HAP-1 (cell line): ENCODE measurements at regions of chr19 and their contacts with region 1.

Region 1: DNA sequence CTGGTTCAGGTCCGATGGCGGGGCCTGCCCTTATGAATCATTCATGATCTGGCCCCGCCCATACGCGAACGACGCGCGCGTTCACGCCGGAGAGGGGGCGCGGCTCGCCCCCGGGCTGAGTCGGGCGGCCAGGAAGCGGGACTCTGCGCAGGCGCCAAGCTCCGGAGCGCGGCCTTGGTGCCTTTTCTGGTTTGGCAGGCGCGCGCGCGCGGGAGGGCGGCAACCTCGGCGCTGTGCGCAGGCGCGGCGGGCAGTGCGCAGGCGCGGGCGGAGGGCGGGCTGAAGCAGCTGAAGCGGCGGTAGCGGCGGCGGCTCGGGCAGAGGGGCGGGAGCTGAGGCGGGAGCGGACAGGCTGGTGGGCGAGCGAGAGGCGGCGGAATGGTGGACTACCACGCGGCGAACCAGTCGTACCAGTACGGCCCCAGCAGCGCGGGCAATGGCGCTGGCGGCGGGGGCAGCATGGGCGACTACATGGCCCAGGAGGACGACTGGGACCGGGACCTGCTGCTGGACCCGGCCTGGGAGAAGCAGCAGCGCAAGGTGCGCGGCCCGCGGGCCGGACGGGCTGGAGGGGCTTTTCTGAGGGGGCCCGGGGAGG is at the start of gene ACTN4:
- DNase-seq: peak; percentile 87 to 99
- H3K4me3 ChIP-seq: peak within 1 kb of the TSS; percentile 95
- H3K4me1 ChIP-seq: peaks cover 28% of the 10 kb centered on the region
- H3K27me3 ChIP-seq: no peaks in the 10 kb centered on the region

Region 2: DNA sequence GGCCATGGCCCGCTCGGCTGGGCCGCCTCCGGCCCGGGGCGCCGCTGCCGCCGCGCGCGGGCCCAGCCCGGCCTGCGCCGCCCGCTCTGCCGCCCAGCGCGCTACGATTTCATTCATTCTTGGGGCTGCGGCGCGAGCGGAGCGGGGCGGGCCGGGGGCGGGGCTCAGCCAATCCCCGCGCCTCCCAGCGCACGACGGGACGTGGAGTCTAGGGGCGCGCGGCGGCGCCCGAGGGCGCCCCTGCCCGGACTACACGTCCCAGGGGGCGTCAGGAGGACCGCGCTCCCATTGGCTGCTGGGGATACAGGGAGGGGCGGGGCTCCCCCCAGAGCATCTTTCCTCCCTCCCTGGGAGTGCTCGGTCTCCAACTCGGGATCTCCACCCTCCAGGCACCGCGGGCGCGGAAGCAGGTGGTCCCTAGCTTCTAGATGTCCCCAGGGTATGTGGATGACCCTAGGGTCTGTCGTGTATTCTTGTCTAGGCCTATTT is 417.8 kb before region 1 on chr19:
- in situ Hi-C with region 1: loop called (anchors 25 kb)
- DNase-seq: peak; percentile 92 to 94
- H3K4me3 ChIP-seq: peak overlapping the region; percentile 70
- H3K4me1 ChIP-seq: peaks cover 16% of the 10 kb centered on the region
- H3K27me3 ChIP-seq: peaks cover 8% of the 10 kb centered on the region

Region 3: GRCh38 chr19:38571682-38572081 is 75.8 kb before region 1 on chr19:
- in situ Hi-C with region 1: no loop called
- DNase-seq: no peak
- H3K4me3 ChIP-seq: no peak overlapping the region
- H3K4me1 ChIP-seq: no peaks in the 10 kb centered on the region
- H3K27me3 ChIP-seq: no peaks in the 10 kb centered on the region